Activated CD4-positive, alpha-beta memory T cell treated with anti-CD3 and anti-CD28 coated beads, Interleukin-2, amount 10 ng/mL, durations not matched to agents 7 days and 5 days (primary cell): ENCODE measurements at regions of chr7 and their contacts with region 1.

Region 1: DNA sequence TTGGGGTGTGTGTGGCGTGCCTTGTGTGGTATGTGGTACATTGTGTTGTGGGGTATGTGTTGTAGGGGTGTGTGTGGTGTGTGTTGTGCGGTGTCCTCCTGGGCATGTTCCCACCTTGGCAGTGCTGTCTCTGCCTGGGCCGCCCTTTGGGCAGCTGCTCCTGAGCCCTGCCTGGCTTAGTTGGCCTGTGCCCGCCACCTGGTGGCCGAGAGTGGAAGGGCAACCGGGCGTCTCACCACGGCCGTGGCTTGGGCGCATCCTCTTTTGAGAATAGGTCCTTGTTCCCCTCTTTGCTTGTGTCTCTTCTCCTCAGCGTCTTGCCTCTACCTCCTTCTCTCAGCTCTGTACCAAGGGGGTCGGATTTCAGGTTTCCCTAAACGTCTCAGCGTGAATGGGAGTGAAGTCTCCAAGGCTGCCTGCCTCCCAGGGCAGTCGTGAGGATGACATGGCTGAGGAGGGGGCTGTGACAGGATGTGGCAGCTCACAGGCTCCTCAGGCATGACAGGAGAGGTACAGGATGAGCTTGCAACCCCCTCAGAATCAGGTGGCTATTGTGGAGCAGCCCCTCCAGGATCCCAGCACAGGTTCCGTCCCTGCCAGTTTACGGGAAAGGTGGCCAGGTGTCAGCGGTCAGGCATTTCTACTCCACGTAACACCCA is 98.4 kb upstream of the PODXL start:
- DNase-seq: peak; percentile 85
- H3K4me3 Mint-ChIP-seq: no peak overlapping the region
- H3K27ac Mint-ChIP-seq: no peak overlapping the region
- H3K4me1 Mint-ChIP-seq: no peaks in the 10 kb centered on the region
- H3K27me3 Mint-ChIP-seq: peaks cover 2% of the 10 kb centered on the region

Region 2: DNA sequence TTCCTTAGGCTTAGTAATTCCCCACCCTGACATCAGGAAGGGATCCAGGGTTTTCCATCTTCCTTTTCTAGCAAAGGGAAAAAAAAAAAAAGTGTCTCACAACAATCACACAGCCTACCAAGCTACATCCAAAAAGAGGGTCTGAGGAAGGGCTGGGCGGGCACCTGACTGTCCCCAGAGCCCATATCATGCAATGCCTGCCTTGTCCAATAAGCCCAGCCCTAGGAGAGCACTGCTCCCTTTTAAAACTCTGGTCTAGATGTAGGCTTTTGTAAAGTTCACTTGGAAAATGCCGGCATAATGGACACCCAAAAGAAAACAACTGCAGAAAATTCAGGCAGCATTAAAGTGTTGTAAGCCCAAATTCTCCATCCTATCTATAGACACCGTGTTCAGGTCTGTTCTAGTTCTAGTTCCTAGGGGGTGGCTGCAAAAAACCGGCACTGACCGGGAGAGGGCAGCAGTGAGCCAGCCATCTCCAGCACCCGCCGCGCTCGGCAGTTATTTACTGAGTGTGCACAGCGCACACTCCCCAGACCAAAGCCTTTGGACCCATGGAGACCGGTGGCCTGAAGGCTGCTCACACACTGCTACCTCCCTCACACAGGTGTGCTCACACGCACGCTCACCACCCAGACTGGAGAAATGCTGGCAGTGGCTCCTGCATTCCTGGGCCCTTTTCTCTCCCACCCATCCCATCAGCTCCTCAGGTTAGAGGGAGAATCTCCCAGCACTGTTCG is 147.0 kb before region 1 on chr7:
- CTCF ChIA-PET with region 1: interaction called, 13 read pairs
- POLR2A ChIA-PET with region 1: no interaction called
- DNase-seq: peak; percentile 84
- H3K4me3 Mint-ChIP-seq: no peak overlapping the region
- H3K27ac Mint-ChIP-seq: no peak overlapping the region
- H3K4me1 Mint-ChIP-seq: peaks cover 21% of the 10 kb centered on the region
- H3K27me3 Mint-ChIP-seq: no peaks in the 10 kb centered on the region

Region 3: GRCh38 chr7:131625817-131626372 is 28.9 kb before region 1 on chr7:
- CTCF ChIA-PET with region 1: no interaction called
- POLR2A ChIA-PET with region 1: no interaction called
- DNase-seq: no peak
- H3K4me3 Mint-ChIP-seq: no peak overlapping the region
- H3K27ac Mint-ChIP-seq: no peak overlapping the region
- H3K4me1 Mint-ChIP-seq: no peaks in the 10 kb centered on the region
- H3K27me3 Mint-ChIP-seq: peaks cover 2% of the 10 kb centered on the region

Region 4: GRCh38 chr7:132049462-132050304 is 394.9 kb after region 1 on chr7:
- CTCF ChIA-PET with region 1: no interaction called
- POLR2A ChIA-PET with region 1: no interaction called
- DNase-seq: peak; percentile 29
- H3K4me3 Mint-ChIP-seq: no peak overlapping the region
- H3K27ac Mint-ChIP-seq: no peak overlapping the region
- H3K4me1 Mint-ChIP-seq: no peaks in the 10 kb centered on the region
- H3K27me3 Mint-ChIP-seq: peaks cover 4% of the 10 kb centered on the region